ENCODE measurements at regions of chr3 and their contacts with region 1.

Region 1: GRCh38 chr3:136075218-136075808 is 109.8 kb downstream of the PPP2R3A start:
- DNase-seq: peak; percentile 54 to 68 (median 67)
- ATAC-seq: peak; percentile 78 to 84 (median 80)
- H3K4me3 ChIP-seq: no peak overlapping the region
- H3K27ac ChIP-seq: peak overlapping the region in 8 of 12 donors; percentile 0 to 59 (median 36)
- H3K4me1 ChIP-seq: peaks cover 0 to 33% (median 17%) of the 10 kb centered on the region in 12 donors
- H3K27me3 ChIP-seq: no peaks in the 10 kb centered on the region
- CTCF ChIP-seq: peak; percentile 78 to 97 (median 93)
- POLR2A ChIP-seq: no peak

Region 2: DNA sequence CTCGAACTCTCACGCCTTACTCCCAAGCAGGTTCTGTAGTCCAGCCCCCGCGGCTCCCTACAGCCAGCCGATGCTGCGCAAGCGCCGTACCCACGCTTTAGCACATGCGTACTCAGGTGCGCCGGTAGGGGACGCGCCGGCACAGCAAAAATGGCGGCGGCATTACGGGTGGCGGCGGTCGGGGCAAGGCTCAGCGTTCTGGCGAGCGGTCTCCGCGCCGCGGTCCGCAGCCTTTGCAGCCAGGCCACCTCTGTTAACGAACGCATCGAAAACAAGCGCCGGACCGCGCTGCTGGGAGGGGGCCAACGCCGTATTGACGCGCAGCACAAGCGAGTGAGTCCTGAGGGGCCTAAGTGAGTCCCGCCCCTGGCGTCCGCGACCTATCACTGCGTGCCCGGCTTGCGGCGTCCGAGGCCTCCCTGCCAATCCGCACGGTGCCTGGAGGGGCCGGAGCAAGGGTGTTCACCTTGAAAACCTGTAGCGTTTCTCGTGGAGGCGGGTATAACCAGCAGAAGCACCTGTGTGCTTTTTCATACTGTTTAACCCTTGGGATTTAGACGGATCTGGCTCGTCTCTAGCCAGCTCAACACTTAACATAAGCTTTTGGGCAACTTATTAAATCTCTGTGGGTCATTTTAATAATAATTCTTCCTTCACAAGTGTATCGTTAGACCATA is 175.1 kb after region 1 on chr3 and contains the start of gene PCCB:
- intact Hi-C with region 1: loop called in 9 of 10 experiments (anchors 2 to 10 kb)
- DNase-seq: peak; percentile 92 to 98 (median 96)
- ATAC-seq: peak; percentile 98 to 99 (median 98)
- H3K4me3 ChIP-seq: peak within 1 kb of the TSS; percentile 35 to 94 (median 73)
- H3K27ac ChIP-seq: peak within 1 kb of the TSS; percentile 77 to 98 (median 93)
- H3K4me1 ChIP-seq: peaks cover 0 to 21% (median 12%) of the 10 kb centered on the region in 12 donors
- H3K27me3 ChIP-seq: no peaks in the 10 kb centered on the region
- CTCF ChIP-seq: peak; percentile 74 to 92 (median 86)
- POLR2A ChIP-seq: peak in 1 of 2 donors; percentile 62
- total RNA-seq, gene PCCB: 58.5 to 154 (median 103) TPM

Region 3: DNA sequence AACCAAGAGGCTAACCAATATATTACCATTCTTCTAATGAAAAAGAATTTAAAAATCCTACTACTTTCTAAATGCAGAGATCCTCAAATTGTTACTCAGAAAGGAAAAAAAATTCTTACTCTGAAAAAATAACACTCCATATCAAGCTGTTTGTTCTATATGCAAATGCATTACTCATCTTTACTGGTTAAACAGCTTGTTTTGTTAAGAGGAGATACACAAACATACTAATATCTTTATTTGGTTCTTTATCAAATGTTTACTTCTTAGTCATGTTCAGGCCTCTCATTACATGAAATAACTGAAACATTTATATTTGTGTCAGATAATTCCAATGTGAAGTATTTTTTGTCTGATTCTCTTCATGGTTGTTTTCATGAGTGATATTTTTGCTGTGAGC is 321.6 kb after region 1 on chr3:
- intact Hi-C with region 1: loop called in 4 of 10 experiments (anchors 10 kb)
- DNase-seq: no peak
- ATAC-seq: no peak
- H3K4me3 ChIP-seq: no peak overlapping the region
- H3K27ac ChIP-seq: no peak overlapping the region
- H3K4me1 ChIP-seq: peaks cover 0 to under 1% (median 0%) of the 10 kb centered on the region in 12 donors
- H3K27me3 ChIP-seq: no peaks in the 10 kb centered on the region
- CTCF ChIP-seq: no peak
- POLR2A ChIP-seq: no peak